Dorsolateral prefrontal cortex (tissue), 120 donors: ENCODE measurements at regions of chr18 and their contacts with region 1.

Region 1: DNA sequence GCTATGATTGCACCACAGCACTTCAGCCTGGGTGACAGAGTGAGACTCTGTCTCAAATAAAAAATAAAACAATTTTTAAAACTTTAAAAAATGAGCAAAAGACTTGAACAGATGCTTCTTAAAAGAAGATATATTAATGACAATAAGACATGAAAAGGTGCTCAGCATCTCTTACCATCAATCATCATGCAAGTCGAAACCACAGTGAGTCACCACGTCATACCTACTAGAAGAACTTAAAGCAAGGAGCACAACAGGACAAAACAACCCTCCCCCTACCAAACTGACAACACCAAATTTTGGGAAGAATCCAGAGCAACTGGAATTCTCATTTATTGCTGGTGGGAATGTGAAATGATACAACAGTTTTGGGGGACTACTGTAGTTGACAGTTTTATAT is 251.6 kb downstream of the BCL2 start:
- DNase-seq: no peak
- H3K4me3 ChIP-seq: no peak overlapping the region
- H3K27ac ChIP-seq: no peak overlapping the region
- H3K27me3 ChIP-seq: no peaks in the 10 kb centered on the region
- CTCF ChIP-seq: no peak

Region 2: DNA sequence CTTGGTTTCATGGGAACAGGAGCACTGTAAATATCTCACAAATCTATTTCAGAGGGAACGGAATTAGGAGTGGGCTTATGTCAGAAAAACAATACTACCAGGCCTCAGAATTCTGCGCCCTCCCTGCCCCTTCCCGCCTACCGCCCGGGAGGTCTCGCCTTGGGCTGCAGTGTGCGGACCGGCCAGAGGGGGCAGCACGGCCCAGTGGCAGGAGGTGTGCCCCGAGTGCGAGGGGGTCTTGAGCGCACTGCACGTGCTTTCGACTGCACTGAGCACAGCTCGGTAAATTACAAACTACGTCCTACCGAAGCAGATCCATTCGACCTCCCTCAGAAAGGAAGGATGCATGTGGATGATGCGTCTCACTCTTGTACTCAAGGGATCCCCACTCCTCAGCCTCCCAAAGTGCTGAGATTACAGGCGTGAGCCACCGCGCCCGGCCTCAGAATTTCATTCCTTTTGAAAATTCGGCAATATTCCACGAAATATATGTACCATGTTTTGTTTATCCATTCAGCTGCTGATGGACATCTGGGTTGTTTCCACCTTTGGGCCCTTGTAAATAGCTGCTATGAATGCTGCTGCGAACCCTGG is 45.4 kb before region 1 on chr18:
- intact Hi-C with region 1: loop called in 1 of 2 experiments (anchors 5 kb)
- DNase-seq: no peak
- H3K4me3 ChIP-seq: no peak overlapping the region
- H3K27ac ChIP-seq: no peak overlapping the region
- H3K27me3 ChIP-seq: peaks cover 0 to 3% (median 0%) of the 10 kb centered on the region in 45 donors
- CTCF ChIP-seq: peak in 29 of 56 donors; percentile 11 to 47 (median 29)